Naive thymus-derived CD4-positive, alpha-beta T cell (primary cell): ENCODE measurements at regions of chr20 and their contacts with region 1.

Region 1: DNA sequence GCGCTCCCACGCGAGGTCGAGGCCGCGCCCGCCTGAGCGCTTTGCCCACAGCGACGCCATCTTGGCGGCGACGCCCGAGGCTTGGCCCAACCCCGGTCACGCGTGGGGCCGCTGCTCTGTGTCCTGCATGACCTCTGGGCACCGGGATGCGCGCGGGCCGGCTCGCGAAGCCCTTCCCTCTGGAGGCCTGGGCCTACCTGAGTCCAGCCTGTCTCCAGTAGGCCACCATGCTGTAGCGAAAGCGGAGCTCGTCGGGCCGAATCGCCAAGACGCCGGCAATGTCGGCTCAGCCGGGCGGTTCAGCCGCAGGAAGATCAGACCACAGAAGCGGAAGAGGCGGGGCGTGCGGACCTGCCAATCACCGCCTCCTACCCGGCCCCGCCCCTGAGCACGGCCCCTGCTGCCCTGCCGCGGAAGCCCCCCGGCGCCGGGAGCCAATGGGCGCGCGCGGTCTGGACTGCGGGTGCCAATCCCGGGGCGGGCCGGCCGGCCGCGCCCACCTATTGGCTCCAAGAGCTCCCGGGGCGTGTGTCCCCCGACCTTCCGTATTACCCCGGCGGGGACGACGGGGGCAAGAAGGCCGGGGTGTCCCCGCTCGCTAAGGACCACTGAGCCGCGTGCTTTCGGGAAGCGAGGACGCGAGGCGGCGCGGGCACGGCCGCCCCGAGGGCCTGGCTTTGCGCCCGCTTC is at the start of gene ATP5F1E:
- DNase-seq: peak; percentile 94 to 98 (median 96)
- ATAC-seq: peak; percentile 98
- H3K4me3 ChIP-seq: peak within 1 kb of the TSS; percentile 62
- H3K4me3 Mint-ChIP-seq: peak within 1 kb of the TSS; percentile 87 to 96 (median 94)
- H3K27ac ChIP-seq: peak within 1 kb of the TSS; percentile 85
- H3K27ac Mint-ChIP-seq: peak within 1 kb of the TSS; percentile 86 to 98 (median 94)
- H3K4me1 ChIP-seq: peaks cover 40 to 44% of the 10 kb centered on the region in 2 donors
- H3K4me1 Mint-ChIP-seq: peaks cover 40 to 62% (median 56%) of the 10 kb centered on the region in 7 donors
- H3K27me3 ChIP-seq: no peaks in the 10 kb centered on the region
- H3K27me3 Mint-ChIP-seq: no peaks in the 10 kb centered on the region
- total RNA-seq, gene ATP5F1E: 57.0 to 81.7 (median 67.4) TPM

Region 2: DNA sequence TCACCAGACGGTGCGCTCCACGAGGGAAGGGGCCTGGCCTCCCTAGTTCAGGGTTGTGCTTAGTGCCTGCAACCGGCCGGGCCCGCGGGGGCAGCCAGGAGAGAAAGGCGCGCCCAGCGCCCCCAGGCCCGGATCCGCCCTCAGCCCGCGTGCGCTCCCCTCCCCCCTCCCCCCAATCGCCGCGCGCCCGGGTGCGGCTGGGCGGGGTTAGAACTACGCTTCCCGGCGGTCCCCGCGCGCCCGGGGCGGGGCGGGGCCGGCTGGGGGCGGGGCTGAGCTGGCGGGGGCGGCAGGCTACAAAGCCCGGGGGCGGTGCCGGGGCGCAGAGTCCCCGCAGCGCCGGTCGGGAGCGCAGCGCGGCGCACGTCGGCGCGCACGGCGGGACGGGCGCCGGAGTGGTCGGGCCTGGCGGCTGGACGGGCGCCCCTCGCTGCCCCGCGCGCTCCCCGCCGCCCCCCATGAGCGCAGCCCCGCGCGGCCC is 1641.1 kb before region 1 on chr20 and contains the start of gene RBM38:
- CTCF ChIA-PET with region 1: no interaction called
- POLR2A ChIA-PET with region 1: interaction called, 3 read pairs
- intact Hi-C with region 1: loop called in 1 of 2 experiments (anchors 10 kb)
- DNase-seq: peak; percentile 64 to 89 (median 71)
- ATAC-seq: peak; percentile 83
- H3K4me3 ChIP-seq: peak within 1 kb of the TSS; percentile 99
- H3K4me3 Mint-ChIP-seq: peak within 1 kb of the TSS; percentile 90 to 99 (median 98)
- H3K27ac ChIP-seq: peak within 1 kb of the TSS; percentile 83
- H3K27ac Mint-ChIP-seq: peak within 1 kb of the TSS; percentile 92 to 100 (median 99)
- H3K4me1 ChIP-seq: peaks cover 45 to 47% of the 10 kb centered on the region in 2 donors
- H3K4me1 Mint-ChIP-seq: peaks cover 36 to 54% (median 45%) of the 10 kb centered on the region in 7 donors
- H3K27me3 ChIP-seq: no peaks in the 10 kb centered on the region
- H3K27me3 Mint-ChIP-seq: no peaks in the 10 kb centered on the region
- total RNA-seq, gene RBM38: 70.6 to 260 (median 127) TPM

Region 3: GRCh38 chr20:58850693-58851174 is 181.4 kb before region 1 on chr20 and contains the start of gene GNAS-AS1:
- CTCF ChIA-PET with region 1: no interaction called
- POLR2A ChIA-PET with region 1: no interaction called
- intact Hi-C with region 1: no loop called
- DNase-seq: peak; percentile 57 to 81 (median 78)
- ATAC-seq: peak; percentile 87
- H3K4me3 ChIP-seq: peak within 1 kb of the TSS; percentile 61
- H3K4me3 Mint-ChIP-seq: peak within 1 kb of the TSS; percentile 83 to 95 (median 92)
- H3K27ac ChIP-seq: no peak within 1 kb of the TSS
- H3K27ac Mint-ChIP-seq: peak within 1 kb of the TSS in 4 of 9 donors; percentile 19 to 81 (median 54)
- H3K4me1 ChIP-seq: no peaks in the 10 kb centered on the region
- H3K4me1 Mint-ChIP-seq: peaks cover 11 to 36% (median 30%) of the 10 kb centered on the region in 7 donors
- H3K27me3 ChIP-seq: peaks cover 0 to 10% of the 10 kb centered on the region in 2 donors
- H3K27me3 Mint-ChIP-seq: peaks cover 21 to 67% (median 27%) of the 10 kb centered on the region in 5 donors
- total RNA-seq, gene GNAS-AS1: 0.13 to 2.0 (median 1.5) TPM

Region 4: DNA sequence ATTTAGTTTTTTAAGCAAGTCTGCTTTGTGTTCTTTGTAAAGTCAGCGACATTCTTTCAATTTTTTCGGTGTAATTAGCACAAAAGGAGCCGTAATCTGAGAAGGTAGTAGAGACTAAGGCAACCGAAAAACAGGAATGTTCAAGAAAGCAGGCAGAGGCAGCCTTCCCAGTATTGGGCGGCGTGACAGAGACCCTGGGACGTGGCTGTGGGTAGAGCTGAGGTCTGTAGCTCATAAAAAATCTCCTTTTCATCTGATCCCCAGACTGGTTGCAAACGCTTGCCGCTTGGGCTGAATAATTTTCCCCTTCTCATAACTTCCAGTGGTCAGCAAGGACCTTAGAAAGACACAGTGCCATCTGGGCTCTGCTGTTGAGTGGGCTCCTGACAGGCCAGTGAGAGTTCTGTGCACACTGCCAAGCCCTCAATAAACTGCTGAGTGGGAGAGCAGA is 148.9 kb before region 1 on chr20:
- CTCF ChIA-PET with region 1: no interaction called
- POLR2A ChIA-PET with region 1: interaction called, 10 read pairs
- intact Hi-C with region 1: no loop called
- DNase-seq: no peak
- ATAC-seq: no peak
- H3K4me3 ChIP-seq: no peak overlapping the region
- H3K4me3 Mint-ChIP-seq: no peak overlapping the region
- H3K27ac ChIP-seq: no peak overlapping the region
- H3K27ac Mint-ChIP-seq: peak overlapping the region in 1 of 9 donors; percentile 45
- H3K4me1 ChIP-seq: peaks cover 0 to 4% of the 10 kb centered on the region in 2 donors
- H3K4me1 Mint-ChIP-seq: peaks cover 4 to 47% (median 31%) of the 10 kb centered on the region in 7 donors
- H3K27me3 ChIP-seq: no peaks in the 10 kb centered on the region
- H3K27me3 Mint-ChIP-seq: peaks cover 0 to 4% (median 0%) of the 10 kb centered on the region in 5 donors

Region 5: GRCh38 chr20:58980700-58981627 is 51.2 kb before region 1 on chr20 and contains the start of gene NELFCD:
- CTCF ChIA-PET with region 1: interaction called, 4 read pairs
- POLR2A ChIA-PET with region 1: interaction called, 16 read pairs
- intact Hi-C with region 1: loop called (anchors 1 kb)
- DNase-seq: peak; percentile 78 to 96 (median 88)
- ATAC-seq: peak; percentile 97
- H3K4me3 ChIP-seq: peak within 1 kb of the TSS; percentile 91
- H3K4me3 Mint-ChIP-seq: peak within 1 kb of the TSS; percentile 86 to 97 (median 94)
- H3K27ac ChIP-seq: peak within 1 kb of the TSS; percentile 88
- H3K27ac Mint-ChIP-seq: peak within 1 kb of the TSS; percentile 77 to 98 (median 90)
- H3K4me1 ChIP-seq: peaks cover 24% of the 10 kb centered on the region in 2 donors
- H3K4me1 Mint-ChIP-seq: peaks cover 26 to 41% (median 32%) of the 10 kb centered on the region in 7 donors
- H3K27me3 ChIP-seq: no peaks in the 10 kb centered on the region
- H3K27me3 Mint-ChIP-seq: peaks cover 0 to 9% (median 0%) of the 10 kb centered on the region in 5 donors
- total RNA-seq, gene NELFCD: 84.5 to 96.1 (median 90.8) TPM

Region 6: GRCh38 chr20:59042796-59043660 is 10.9 kb after region 1 on chr20:
- CTCF ChIA-PET with region 1: no interaction called
- POLR2A ChIA-PET with region 1: interaction called, 58 read pairs
- intact Hi-C with region 1: loop called (anchors 1 kb)
- DNase-seq: peak; percentile 90 to 98 (median 94)
- ATAC-seq: peak; percentile 98
- H3K4me3 ChIP-seq: peak overlapping the region; percentile 76
- H3K4me3 Mint-ChIP-seq: peak overlapping the region; percentile 81 to 96 (median 90)
- H3K27ac ChIP-seq: peak overlapping the region; percentile 93
- H3K27ac Mint-ChIP-seq: peak overlapping the region; percentile 76 to 96 (median 91)
- H3K4me1 ChIP-seq: peaks cover 30 to 32% of the 10 kb centered on the region in 2 donors
- H3K4me1 Mint-ChIP-seq: peaks cover 35 to 54% (median 50%) of the 10 kb centered on the region in 7 donors
- H3K27me3 ChIP-seq: no peaks in the 10 kb centered on the region
- H3K27me3 Mint-ChIP-seq: no peaks in the 10 kb centered on the region

Region 7: DNA sequence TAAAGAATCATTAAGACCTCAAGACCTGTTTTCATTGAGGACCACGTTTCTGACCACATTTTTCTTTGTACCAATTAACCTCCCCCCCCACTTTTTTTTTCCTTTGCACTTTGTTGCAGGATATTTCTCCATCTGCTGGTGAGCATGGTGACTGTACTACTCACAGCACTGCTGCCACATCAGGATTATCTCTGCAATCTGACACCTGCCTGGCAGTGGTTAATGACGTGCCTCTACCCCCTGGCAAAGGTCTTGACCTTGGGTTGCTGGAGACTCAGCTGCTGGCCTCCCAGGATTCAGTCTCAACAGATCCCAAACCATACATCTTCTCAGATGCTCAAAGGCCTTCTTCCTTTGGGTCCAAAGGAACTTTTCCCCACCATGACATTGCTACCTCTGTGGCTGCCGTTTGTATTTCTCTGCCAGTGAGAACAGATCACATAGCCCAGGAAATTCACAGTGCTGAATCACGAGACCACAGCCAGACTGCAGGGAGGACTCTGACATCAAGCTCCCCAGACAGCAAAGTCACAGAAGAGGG is 221.7 kb after region 1 on chr20:
- CTCF ChIA-PET with region 1: no interaction called
- POLR2A ChIA-PET with region 1: no interaction called
- intact Hi-C with region 1: loop called in 1 of 2 experiments (anchors 1 kb)
- DNase-seq: peak in 7 of 9 donors; percentile 10 to 41 (median 25)
- ATAC-seq: peak; percentile 63
- H3K4me3 ChIP-seq: peak overlapping the region; percentile 27
- H3K4me3 Mint-ChIP-seq: peak overlapping the region; percentile 66 to 83 (median 73)
- H3K27ac ChIP-seq: peak overlapping the region; percentile 58
- H3K27ac Mint-ChIP-seq: peak overlapping the region; percentile 83 to 97 (median 93)
- H3K4me1 ChIP-seq: peaks cover 43 to 45% of the 10 kb centered on the region in 2 donors
- H3K4me1 Mint-ChIP-seq: peaks cover 50 to 82% (median 66%) of the 10 kb centered on the region in 7 donors
- H3K27me3 ChIP-seq: no peaks in the 10 kb centered on the region
- H3K27me3 Mint-ChIP-seq: no peaks in the 10 kb centered on the region

Region 8: DNA sequence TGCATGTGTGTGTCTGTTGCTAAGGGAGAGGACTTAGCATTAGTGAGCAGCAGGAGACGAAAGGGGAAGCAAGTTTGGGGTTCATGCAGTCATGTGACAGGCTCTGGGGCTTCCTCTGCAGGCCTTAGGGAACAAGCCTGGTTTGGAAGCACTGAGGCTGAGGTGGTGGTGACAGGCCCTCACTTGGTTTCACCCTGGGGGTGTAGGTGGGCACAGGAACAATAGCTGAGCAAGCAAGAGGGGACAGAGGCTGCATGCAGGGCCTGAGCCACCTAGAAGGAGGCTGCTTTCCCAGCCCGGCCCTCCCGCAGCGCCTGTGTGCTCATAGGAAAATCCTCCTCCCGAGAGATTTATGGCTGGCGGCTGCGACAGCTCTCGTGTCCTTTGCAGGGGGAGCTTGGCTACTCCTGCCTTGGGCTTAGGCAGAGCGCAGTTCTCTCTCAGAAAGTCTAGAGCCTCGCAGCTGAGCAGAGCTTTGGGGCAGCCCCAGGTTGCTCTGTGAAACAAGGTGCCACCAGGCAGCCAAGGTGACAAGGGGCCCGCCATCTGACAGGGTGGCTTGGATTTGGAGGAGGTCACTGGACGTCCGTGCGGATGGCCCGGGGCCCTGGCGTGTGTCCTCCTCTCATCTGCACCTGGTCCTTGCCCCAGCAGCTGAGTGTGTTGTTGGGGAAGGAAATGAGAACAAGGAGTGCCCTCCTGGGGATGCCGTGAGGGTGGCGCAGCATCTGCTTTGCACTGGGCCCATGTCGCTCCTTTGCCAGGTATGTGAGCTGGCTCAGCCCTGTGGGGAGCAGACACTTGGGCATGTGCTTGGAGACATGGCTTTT is 309.9 kb after region 1 on chr20:
- CTCF ChIA-PET with region 1: no interaction called
- POLR2A ChIA-PET with region 1: no interaction called
- intact Hi-C with region 1: no loop called
- DNase-seq: no peak
- ATAC-seq: peak; percentile 57
- H3K4me3 ChIP-seq: no peak overlapping the region
- H3K4me3 Mint-ChIP-seq: no peak overlapping the region
- H3K27ac ChIP-seq: no peak overlapping the region
- H3K27ac Mint-ChIP-seq: no peak overlapping the region
- H3K4me1 ChIP-seq: no peaks in the 10 kb centered on the region
- H3K4me1 Mint-ChIP-seq: no peaks in the 10 kb centered on the region
- H3K27me3 ChIP-seq: no peaks in the 10 kb centered on the region
- H3K27me3 Mint-ChIP-seq: peaks cover 0 to 5% (median 1%) of the 10 kb centered on the region in 5 donors